Prostate gland (tissue), 2 donors: ENCODE measurements at regions of chr22 and their contacts with region 1.

Region 1: DNA sequence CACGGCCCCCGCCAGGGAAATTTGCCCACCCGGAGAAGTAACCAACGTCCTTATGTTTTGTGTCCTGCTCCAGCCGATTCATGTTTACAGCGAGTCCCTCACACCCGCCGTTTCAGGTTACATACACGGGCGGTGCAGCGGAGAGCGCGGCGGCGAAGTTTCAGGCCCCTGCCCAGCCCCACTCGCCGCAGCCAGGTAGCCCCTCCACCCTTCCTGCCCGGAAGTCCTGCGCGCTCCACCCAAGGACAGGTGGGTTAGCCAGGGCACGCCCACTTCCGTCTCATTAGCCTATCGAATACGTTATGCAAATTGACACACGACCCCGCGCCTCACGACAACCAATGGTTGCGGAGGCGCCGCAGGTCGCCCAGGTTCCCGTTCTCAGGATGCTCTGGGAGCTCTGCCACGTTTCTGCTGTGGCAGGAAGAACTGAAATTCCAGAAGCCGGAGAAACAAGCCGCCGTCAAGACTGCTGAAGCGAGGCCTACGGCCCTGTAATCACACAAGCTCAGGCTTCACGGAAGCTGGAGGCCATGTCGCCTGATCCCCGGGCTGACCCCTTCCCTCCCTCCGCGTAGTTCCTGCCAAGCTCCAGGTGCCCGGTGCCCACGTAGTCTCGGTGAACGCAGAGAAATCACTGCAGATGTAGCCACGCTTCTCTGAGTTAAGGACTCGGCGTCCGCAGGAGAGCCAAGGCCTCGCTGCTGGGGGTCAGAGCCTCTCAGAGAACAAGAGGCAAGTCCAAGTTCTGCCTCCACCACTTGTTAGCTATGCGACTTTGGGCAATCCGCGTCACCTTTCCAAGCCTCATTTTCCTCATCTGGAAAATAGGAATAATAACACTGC is 22.4 kb upstream of the MYH9 start:
- DNase-seq: peak; percentile 99
- H3K4me3 ChIP-seq: peak overlapping the region; percentile 19 to 26
- H3K27ac ChIP-seq: peak overlapping the region; percentile 93 to 94
- H3K4me1 ChIP-seq: no peaks in the 10 kb centered on the region
- H3K27me3 ChIP-seq: no peaks in the 10 kb centered on the region
- CTCF ChIP-seq: peak; percentile 8 to 64 (median 34)
- POLR2A ChIP-seq: peak; percentile 83

Region 2: GRCh38 chr22:36445158-36445668 is 35.1 kb after region 1 on chr22:
- intact Hi-C with region 1: loop called (anchors 5 kb)
- DNase-seq: no peak
- H3K4me3 ChIP-seq: no peak overlapping the region
- H3K27ac ChIP-seq: peak overlapping the region; percentile 48 to 49
- H3K4me1 ChIP-seq: no peaks in the 10 kb centered on the region
- H3K27me3 ChIP-seq: no peaks in the 10 kb centered on the region
- CTCF ChIP-seq: no peak
- POLR2A ChIP-seq: no peak